ENCODE measurements at regions of chrX and their contacts with region 1.

Region 1: DNA sequence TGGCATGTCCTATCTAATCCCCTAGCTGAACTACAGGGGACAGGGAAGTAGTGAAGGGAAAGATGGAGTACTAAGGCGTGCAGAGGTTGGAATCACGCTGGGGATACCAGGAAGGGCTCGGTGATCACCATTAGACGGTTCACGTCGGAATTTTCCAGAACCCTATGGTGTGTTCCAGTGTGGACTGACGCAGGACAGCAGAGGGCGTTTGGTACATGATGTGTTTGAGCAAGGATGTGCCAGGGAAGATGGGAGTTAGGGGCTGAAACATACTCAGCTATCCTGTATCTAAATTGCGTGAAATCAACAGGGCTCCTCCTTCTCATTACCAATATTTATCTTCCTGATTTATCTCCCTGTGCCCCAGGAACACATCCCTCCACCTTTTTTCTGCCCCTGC is 33.7 kb downstream of the PRPS2 start:
- DNase-seq: no peak
- H3K4me3 ChIP-seq: no peak overlapping the region
- H3K27ac ChIP-seq: no peak overlapping the region
- H3K4me1 ChIP-seq: peaks cover under 1% of the 10 kb centered on the region
- H3K27me3 ChIP-seq: no peaks in the 10 kb centered on the region
- CTCF ChIP-seq: no peak

Region 2: DNA sequence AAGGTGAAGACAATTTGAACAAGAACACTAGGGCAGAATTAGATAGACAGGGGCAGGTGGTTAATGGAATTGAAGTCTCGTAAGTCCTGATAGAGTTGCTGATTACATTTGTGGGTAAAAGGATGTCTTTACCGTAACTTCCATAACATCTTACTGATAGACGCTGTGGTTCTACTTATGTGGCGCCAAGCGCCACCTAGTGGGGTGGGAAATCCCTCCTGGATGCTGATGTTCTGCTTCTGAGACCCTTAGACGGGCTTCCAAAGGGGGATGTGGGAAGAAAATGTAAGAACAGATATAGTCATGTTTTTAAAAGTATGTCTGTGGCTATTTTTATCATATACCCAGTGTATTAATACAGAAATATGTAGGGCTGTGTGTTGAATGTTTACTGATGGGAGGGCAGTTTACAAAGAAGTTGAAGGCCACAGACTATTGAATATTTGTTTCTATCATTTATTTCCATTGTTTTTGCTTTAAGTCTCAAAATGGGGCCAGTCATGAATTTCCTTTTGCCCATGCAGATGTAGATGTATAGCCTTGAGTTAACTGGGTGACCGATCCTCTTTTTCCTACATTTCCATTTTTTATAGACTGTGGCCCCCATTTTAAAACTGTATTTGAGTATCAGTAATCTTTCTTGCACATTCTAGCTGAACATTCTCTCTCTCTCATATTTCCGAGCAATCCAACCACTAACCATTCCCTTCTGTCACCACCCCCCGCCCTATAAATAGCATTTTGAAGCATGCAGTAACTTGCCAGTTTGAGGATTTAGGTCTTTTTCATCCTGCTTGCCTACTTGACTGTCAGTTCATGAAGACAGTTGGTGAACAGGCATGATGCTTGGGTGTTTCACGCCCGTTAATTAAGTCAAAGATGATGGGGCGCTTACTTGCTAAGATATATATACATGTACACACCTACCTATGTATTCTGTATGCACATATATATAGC is 69.4 kb after region 1 on chrX:
- CTCF ChIA-PET with region 1: no interaction called
- dilution Hi-C with region 1: no loop called
- in situ Hi-C with region 1: loop called in 1 of 2 experiments (anchors 5 kb)
- intact Hi-C with region 1: no loop called
- DNase-seq: no peak
- H3K4me3 ChIP-seq: no peak overlapping the region
- H3K27ac ChIP-seq: no peak overlapping the region
- H3K4me1 ChIP-seq: peaks cover 3% of the 10 kb centered on the region
- H3K27me3 ChIP-seq: peaks cover 7% of the 10 kb centered on the region
- CTCF ChIP-seq: peak; percentile 48 to 86